CD4-positive, alpha-beta memory T cell (primary cell): ENCODE measurements at regions of chr3 and their contacts with region 1.

Region 1: GRCh38 chr3:196568246-196569002 is at the starts of genes FBXO45 and WDR53:
- DNase-seq: peak; percentile 95 to 97 (median 96)
- H3K4me3 ChIP-seq: peak within 1 kb of the TSS; percentile 75 to 97
- H3K4me3 Mint-ChIP-seq: peak within 1 kb of the TSS; percentile 95 to 99 (median 98)
- H3K27ac ChIP-seq: peak within 1 kb of the TSS; percentile 84
- H3K27ac Mint-ChIP-seq: peak within 1 kb of the TSS; percentile 97 to 99 (median 99)
- H3K4me1 ChIP-seq: peaks cover 60% of the 10 kb centered on the region
- H3K4me1 Mint-ChIP-seq: peaks cover 31 to 52% (median 42%) of the 10 kb centered on the region in 4 donors
- H3K27me3 ChIP-seq: no peaks in the 10 kb centered on the region
- H3K27me3 Mint-ChIP-seq: no peaks in the 10 kb centered on the region
- total RNA-seq, gene FBXO45: 10.9 to 12.0 TPM
- total RNA-seq, gene WDR53: 37.5 to 38.7 TPM

Region 2: DNA sequence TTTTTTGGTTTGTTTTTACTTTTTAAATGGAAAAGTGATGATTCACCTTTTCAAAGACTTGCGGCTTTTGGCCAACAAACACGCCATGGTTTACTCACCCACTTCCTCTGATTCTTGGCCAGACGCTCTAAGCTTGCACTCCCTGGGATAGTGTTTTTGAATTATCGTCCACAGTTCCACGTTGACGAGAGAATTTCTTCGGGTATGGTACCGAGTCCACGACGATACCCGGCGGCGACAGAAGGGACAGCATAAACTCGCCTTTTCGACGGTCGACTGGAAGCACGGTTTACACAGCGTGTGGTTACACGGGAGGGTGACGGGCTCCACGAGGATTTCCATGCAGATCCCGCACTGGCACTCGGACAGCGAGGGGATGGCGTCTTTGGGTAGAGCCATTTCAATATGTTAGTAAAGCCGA is 65.6 kb before region 1 on chr3:
- CTCF ChIA-PET with region 1: no interaction called
- POLR2A ChIA-PET with region 1: interaction called, 17 read pairs
- intact Hi-C with region 1: loop called (anchors 1 kb)
- DNase-seq: peak; percentile 70 to 87 (median 73)
- H3K4me3 ChIP-seq: peak overlapping the region; percentile 70 to 79
- H3K4me3 Mint-ChIP-seq: peak overlapping the region; percentile 97 to 100 (median 98)
- H3K27ac ChIP-seq: peak overlapping the region; percentile 81
- H3K27ac Mint-ChIP-seq: peak overlapping the region; percentile 94 to 99 (median 97)
- H3K4me1 ChIP-seq: peaks cover 27% of the 10 kb centered on the region
- H3K4me1 Mint-ChIP-seq: peaks cover 25 to 56% (median 38%) of the 10 kb centered on the region in 4 donors
- H3K27me3 ChIP-seq: no peaks in the 10 kb centered on the region
- H3K27me3 Mint-ChIP-seq: no peaks in the 10 kb centered on the region

Region 3: DNA sequence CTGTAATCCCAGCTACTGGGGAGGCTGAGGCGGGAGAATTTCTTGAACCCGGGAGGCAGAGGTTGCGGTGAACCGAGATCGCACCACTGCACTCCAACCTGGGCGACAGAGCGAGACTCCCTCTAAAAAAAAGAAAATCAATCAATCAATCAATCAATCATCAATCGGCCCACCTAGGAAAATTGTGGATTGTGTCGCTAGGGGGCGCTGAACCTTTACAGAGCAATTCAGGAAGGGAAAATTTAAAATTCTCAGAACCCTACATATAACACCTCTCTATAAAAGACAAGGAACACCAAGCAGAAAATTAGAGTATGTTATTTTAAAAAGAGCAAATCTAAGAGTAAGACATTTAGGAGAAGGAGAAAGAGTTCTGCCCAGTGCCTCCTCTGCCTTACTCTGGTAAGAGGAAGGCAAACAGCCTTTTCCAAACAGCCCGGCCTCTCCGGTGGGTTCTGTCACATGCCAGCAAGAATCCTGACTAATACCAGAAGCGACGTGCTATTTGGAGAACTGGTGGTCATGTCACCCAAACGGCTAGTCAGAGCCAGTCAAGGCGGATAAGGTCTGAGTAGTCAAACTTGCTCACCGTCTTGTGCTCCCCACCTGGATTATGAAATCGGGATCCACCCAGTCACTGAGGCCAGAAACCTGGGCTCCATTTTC is 31.0 kb before region 1 on chr3:
- CTCF ChIA-PET with region 1: interaction called, 6 read pairs
- POLR2A ChIA-PET with region 1: interaction called, 4 read pairs
- intact Hi-C with region 1: loop called (anchors 1 kb)
- DNase-seq: peak; percentile 40 to 62 (median 49)
- H3K4me3 ChIP-seq: no peak overlapping the region
- H3K4me3 Mint-ChIP-seq: no peak overlapping the region
- H3K27ac ChIP-seq: no peak overlapping the region
- H3K27ac Mint-ChIP-seq: peak overlapping the region in 1 of 7 donors; percentile 19
- H3K4me1 ChIP-seq: no peaks in the 10 kb centered on the region
- H3K4me1 Mint-ChIP-seq: peaks cover 0 to 3% (median 1%) of the 10 kb centered on the region in 4 donors
- H3K27me3 ChIP-seq: no peaks in the 10 kb centered on the region
- H3K27me3 Mint-ChIP-seq: peaks cover 0 to 2% of the 10 kb centered on the region in 2 donors

Region 4: GRCh38 chr3:196639483-196640296 is 71.3 kb after region 1 on chr3 and contains the start of gene NRROS:
- CTCF ChIA-PET with region 1: no interaction called
- POLR2A ChIA-PET with region 1: interaction called, 13 read pairs
- intact Hi-C with region 1: no loop called
- DNase-seq: peak; percentile 47 to 73 (median 52)
- H3K4me3 ChIP-seq: peak within 1 kb of the TSS; percentile 75 to 89
- H3K4me3 Mint-ChIP-seq: peak within 1 kb of the TSS; percentile 80 to 95 (median 92)
- H3K27ac ChIP-seq: peak within 1 kb of the TSS; percentile 77
- H3K27ac Mint-ChIP-seq: peak within 1 kb of the TSS; percentile 75 to 97 (median 95)
- H3K4me1 ChIP-seq: peaks cover 71% of the 10 kb centered on the region
- H3K4me1 Mint-ChIP-seq: peaks cover 48 to 91% (median 67%) of the 10 kb centered on the region in 4 donors
- H3K27me3 ChIP-seq: no peaks in the 10 kb centered on the region
- H3K27me3 Mint-ChIP-seq: no peaks in the 10 kb centered on the region
- total RNA-seq, gene NRROS: 18.7 to 20.0 TPM

Region 5: DNA sequence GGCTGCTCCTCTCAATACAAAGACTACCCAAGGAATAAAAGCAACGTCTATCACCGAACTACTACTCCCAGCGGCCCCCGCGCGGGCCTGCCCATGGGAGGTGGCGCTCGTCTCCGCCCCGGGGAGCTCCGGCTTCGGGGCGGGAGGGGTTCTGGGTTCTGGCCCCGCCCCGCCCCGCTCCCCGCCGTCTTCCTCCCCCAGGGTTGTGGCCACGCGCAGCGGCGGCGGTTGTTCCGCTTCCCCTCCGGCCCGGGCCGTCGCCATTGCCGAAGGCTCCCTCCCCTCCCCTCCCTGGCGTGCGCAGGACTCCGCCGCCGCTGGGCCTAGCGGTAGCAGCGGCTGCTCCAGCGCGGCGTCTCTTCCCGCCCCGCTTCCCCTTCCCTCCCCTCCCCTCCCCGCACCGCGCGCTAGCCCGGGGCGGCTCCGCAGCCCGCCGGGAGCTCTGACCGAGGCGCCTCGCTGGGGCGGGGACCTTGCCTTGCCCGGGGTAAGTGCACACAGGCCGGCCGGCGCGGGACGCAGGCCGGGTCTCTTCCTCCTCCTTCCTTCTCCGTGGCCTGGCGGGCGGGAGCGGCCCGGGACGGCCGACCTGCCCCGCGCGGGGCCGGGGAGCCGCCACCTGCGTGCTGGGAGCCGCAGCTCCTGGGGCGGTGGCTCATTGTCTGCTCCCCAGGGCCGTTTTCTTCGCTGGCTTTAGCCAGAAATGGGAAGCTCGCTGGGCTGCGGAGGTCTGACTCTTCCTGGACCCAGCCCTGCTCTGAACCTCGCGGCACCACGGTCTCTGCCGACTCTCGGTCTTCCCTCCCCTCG is 171.5 kb after region 1 on chr3 and contains the start of gene PAK2:
- CTCF ChIA-PET with region 1: no interaction called
- POLR2A ChIA-PET with region 1: interaction called, 13 read pairs
- intact Hi-C with region 1: no loop called
- DNase-seq: peak; percentile 85 to 90 (median 87)
- H3K4me3 ChIP-seq: peak within 1 kb of the TSS; percentile 70 to 95
- H3K4me3 Mint-ChIP-seq: peak within 1 kb of the TSS; percentile 96 to 100 (median 100)
- H3K27ac ChIP-seq: peak within 1 kb of the TSS; percentile 99
- H3K27ac Mint-ChIP-seq: peak within 1 kb of the TSS; percentile 97 to 100 (median 99)
- H3K4me1 ChIP-seq: peaks cover 42% of the 10 kb centered on the region
- H3K4me1 Mint-ChIP-seq: peaks cover 21 to 45% (median 28%) of the 10 kb centered on the region in 4 donors
- H3K27me3 ChIP-seq: no peaks in the 10 kb centered on the region
- H3K27me3 Mint-ChIP-seq: no peaks in the 10 kb centered on the region
- total RNA-seq, gene PAK2: 80.4 to 97.4 TPM